Heart left ventricle (tissue), 16 donors: ENCODE measurements at regions of chr2 and their contacts with region 1.

Region 1: DNA sequence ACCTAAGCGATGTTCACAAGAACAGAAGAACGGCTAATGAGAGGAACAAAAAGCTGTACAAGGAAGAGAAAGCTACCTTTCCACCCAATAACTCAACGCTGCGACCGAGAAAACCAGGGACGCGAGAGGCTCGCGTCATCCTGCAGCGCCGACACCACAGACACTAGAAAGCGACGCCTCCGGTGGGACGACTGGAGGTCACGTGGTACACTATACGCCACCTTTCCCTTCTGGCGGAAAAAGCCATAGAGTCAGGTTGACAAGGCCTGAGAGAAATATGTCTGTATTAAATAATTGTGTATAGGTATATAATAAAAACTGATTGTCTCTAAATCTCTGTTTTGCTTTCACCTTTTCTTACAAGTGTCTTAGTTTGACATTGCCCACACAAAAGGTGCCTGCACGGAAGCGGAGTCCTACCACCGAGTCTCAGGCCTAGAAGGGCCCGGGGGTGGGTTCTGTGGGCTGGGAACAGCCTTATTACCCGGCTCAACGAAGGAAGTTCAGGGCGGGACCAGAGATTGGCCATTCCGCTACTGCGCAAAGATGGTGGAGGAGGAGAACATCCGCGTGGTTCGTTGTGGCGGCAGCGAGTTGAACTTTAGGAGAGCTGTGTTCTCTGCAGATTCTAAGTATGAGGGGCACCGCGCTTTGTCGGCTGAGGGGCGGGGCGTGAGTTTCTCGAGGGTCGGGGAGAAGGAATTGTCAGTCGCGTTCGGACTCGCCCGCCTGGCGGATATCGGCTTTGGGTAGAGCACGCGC is at the start of gene WDR75:
- DNase-seq: peak; percentile 93 to 95 (median 95)
- ATAC-seq: peak; percentile 99
- H3K4me3 ChIP-seq: peak within 1 kb of the TSS; percentile 50 to 91 (median 81)
- H3K27ac ChIP-seq: peak within 1 kb of the TSS; percentile 80 to 97 (median 90)
- H3K4me1 ChIP-seq: peaks cover 0 to 45% (median 14%) of the 10 kb centered on the region in 12 donors
- H3K27me3 ChIP-seq: no peaks in the 10 kb centered on the region
- CTCF ChIP-seq: peak in 2 of 12 donors; percentile 6 to 14
- POLR2A ChIP-seq: peak in 1 of 2 donors; percentile 48
- total RNA-seq, gene WDR75: 11.2 to 22.0 (median 14.9) TPM

Region 2: GRCh38 chr2:188969236-188969635 is 471.9 kb before region 1 on chr2:
- intact Hi-C with region 1: no loop called
- DNase-seq: no peak
- ATAC-seq: peak in 2 of 4 donors; percentile 25 to 34
- H3K4me3 ChIP-seq: peak overlapping the region in 2 of 12 donors; percentile 11 to 30
- H3K27ac ChIP-seq: peak overlapping the region in 9 of 12 donors; percentile 17 to 83 (median 53)
- H3K4me1 ChIP-seq: peaks cover 0 to 24% (median 2%) of the 10 kb centered on the region in 12 donors
- H3K27me3 ChIP-seq: no peaks in the 10 kb centered on the region
- CTCF ChIP-seq: no peak
- POLR2A ChIP-seq: no peak

Region 3: GRCh38 chr2:189363559-189363958 is 77.6 kb before region 1 on chr2:
- intact Hi-C with region 1: no loop called
- DNase-seq: no peak
- ATAC-seq: no peak
- H3K4me3 ChIP-seq: no peak overlapping the region
- H3K27ac ChIP-seq: no peak overlapping the region
- H3K4me1 ChIP-seq: no peaks in the 10 kb centered on the region
- H3K27me3 ChIP-seq: no peaks in the 10 kb centered on the region
- CTCF ChIP-seq: no peak
- POLR2A ChIP-seq: no peak

Region 4: DNA sequence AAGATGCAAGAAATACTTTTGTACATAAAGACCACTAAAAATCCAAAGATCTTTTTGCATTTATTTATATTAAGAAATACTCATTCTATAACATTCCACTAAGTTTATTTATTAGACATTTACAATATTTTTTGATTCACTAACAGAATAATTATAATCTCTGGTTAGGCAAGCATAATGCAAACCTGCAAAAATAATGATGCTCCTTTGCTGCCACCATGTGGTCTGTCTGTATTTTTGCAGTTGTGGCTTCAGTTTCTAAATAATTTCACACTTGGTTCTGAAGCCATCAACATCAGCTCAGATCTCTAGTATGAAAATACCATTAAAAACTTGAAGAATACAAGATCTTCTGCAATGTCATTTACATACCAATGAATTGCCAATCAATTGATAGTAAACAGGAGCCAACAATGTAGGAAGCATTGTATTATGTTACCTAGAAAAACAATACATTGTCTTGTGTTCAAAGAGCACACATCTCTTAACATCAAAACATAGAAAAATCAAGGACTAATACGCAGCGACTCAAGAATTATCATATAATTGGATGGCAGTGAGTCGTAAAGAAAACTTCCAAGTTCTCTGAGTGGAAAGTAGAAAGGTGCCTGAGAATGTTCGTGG is 28.7 kb before region 1 on chr2:
- intact Hi-C with region 1: no loop called
- DNase-seq: peak in 1 of 5 donors; percentile 23
- ATAC-seq: peak in 3 of 4 donors; percentile 50 to 72 (median 54)
- H3K4me3 ChIP-seq: no peak overlapping the region
- H3K27ac ChIP-seq: peak overlapping the region in 7 of 12 donors; percentile 2 to 73 (median 45)
- H3K4me1 ChIP-seq: peaks cover 0 to 18% (median 1%) of the 10 kb centered on the region in 12 donors
- H3K27me3 ChIP-seq: no peaks in the 10 kb centered on the region
- CTCF ChIP-seq: peak; percentile 55 to 84 (median 72)
- POLR2A ChIP-seq: no peak

Region 5: DNA sequence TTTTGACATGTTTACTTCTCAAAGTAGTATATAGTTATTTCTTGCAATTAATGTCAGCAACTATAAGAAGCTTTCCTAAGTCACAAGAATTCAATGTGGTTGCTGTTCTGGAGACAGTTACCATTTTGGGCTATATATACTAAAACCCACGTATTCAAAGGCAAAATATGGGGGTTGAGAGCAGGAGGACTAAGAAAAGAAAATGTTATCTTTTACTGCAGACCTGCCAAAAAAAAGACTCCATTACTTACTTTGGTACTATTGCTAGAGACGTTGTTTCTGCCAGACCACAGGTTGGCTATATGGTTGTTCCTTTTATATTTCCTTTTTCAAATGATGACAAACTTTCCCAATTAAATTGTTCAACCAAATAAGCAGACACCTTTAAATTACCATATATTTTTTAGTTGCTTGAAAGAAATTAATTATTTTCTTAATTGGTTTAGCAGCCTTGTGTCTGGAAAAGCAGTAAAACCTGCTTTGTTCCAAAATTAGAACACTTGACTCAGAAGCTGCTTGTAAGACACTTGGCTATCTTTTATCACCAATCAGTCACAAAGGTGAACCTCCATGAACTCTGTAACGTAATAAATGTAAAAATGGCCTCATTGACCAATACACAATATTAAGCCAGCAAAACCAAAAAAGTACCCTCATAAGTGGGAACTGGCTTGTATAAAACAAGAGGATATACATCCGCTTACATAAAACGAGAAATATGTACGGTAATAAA is 329.6 kb after region 1 on chr2:
- intact Hi-C with region 1: loop called in 1 of 10 experiments (anchors 10 kb)
- DNase-seq: no peak
- ATAC-seq: peak in 2 of 4 donors; percentile 42 to 53
- H3K4me3 ChIP-seq: no peak overlapping the region
- H3K27ac ChIP-seq: peak overlapping the region in 3 of 12 donors; percentile 3 to 26 (median 7)
- H3K4me1 ChIP-seq: peaks cover 0 to 11% (median 2%) of the 10 kb centered on the region in 12 donors
- H3K27me3 ChIP-seq: no peaks in the 10 kb centered on the region
- CTCF ChIP-seq: no peak
- POLR2A ChIP-seq: no peak